A549 (cell line): ENCODE measurements at regions of chr2 and their contacts with region 1.

Region 1: DNA sequence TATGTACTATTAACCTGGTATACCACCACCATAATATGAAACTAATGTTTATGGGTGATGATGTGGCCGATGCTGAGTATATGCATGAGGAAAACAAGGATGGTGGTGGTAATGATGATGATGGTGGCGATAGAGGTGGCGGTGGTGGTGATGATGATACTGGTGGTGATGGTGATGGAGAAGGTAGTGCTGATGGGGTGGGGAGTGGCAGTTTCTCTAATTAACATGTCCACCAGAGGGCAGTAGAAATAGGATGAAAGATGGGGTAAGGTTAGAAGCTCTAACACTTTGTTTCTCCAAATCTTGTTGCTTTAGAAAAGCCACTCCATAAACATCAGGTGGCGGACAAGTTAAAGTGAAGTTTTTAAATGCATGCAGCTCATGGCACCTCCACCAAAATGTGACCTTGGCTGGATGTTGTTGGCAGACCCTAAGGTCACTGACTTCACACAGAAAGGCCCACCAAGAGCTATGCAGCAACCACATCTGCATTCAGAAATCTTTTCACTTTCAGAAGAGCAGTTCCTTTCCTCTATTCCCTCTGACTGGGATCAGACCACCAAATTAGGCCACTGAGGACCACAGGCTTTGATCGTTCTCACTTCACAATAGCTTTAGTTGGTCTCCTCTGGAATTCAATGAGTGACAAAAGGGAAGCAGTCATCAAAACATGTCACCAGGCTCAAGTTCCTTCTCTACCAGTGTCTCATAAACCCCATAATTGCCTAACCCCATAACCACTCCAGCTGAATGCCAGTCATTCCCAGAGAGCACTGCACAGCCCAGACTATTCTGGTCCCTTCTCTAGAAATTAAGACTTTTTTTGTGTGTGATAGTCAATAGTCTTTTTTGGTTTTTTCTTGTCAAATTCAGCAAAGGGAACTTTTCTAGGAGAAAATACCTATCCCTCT is 7.5 kb upstream of the BCL11A start:
- DNase-seq: peak in 1 of 2 experiments; percentile 31
- ATAC-seq: peak; percentile 72 to 92
- H3K4me3 ChIP-seq: no peak overlapping the region
- H3K27ac ChIP-seq: no peak overlapping the region
- H3K4me1 ChIP-seq: 0 out of 3 replicates have a peak, but pooled peaks cover 7% of the 10 kb centered on the region
- CTCF ChIP-seq: peak; percentile 64
- EP300 ChIP-seq: no peak
- POLR2A ChIP-seq: no peak
- RAD21 ChIP-seq: 0 out of 5 replicates have a peak, but pooled peaks have one; percentile 18 to 28

Region 2: GRCh38 chr2:60406192-60406591 is 154.8 kb before region 1 on chr2:
- CTCF ChIA-PET with region 1: no interaction called
- POLR2A ChIA-PET with region 1: no interaction called
- DNase-seq: no peak
- ATAC-seq: no peak
- H3K4me3 ChIP-seq: no peak overlapping the region
- H3K27ac ChIP-seq: no peak overlapping the region
- H3K4me1 ChIP-seq: no peaks in the 10 kb centered on the region
- CTCF ChIP-seq: no peak
- EP300 ChIP-seq: no peak
- POLR2A ChIP-seq: no peak
- RAD21 ChIP-seq: no peak

Region 3: GRCh38 chr2:60544062-60544461 is 16.9 kb before region 1 on chr2:
- CTCF ChIA-PET with region 1: interaction called, 13 read pairs
- POLR2A ChIA-PET with region 1: no interaction called
- DNase-seq: no peak
- ATAC-seq: no peak
- H3K4me3 ChIP-seq: no peak overlapping the region
- H3K27ac ChIP-seq: no peak overlapping the region
- H3K4me1 ChIP-seq: no peaks in the 10 kb centered on the region
- CTCF ChIP-seq: no peak
- EP300 ChIP-seq: no peak
- POLR2A ChIP-seq: no peak
- RAD21 ChIP-seq: no peak

Region 4: GRCh38 chr2:60550178-60550983 is 10.6 kb before region 1 on chr2:
- CTCF ChIA-PET with region 1: interaction called, 13 read pairs
- POLR2A ChIA-PET with region 1: no interaction called
- DNase-seq: peak; percentile 65 to 75
- ATAC-seq: peak; percentile 45 to 74
- H3K4me3 ChIP-seq: peak overlapping the region; percentile 63
- H3K27ac ChIP-seq: no peak overlapping the region
- H3K4me1 ChIP-seq: peaks cover 32% of the 10 kb centered on the region
- CTCF ChIP-seq: peak; percentile 82
- EP300 ChIP-seq: no peak
- POLR2A ChIP-seq: no peak
- RAD21 ChIP-seq: peak; percentile 91 to 94